ENCODE measurements at regions of chr3 and their contacts with region 1.

Region 1: DNA sequence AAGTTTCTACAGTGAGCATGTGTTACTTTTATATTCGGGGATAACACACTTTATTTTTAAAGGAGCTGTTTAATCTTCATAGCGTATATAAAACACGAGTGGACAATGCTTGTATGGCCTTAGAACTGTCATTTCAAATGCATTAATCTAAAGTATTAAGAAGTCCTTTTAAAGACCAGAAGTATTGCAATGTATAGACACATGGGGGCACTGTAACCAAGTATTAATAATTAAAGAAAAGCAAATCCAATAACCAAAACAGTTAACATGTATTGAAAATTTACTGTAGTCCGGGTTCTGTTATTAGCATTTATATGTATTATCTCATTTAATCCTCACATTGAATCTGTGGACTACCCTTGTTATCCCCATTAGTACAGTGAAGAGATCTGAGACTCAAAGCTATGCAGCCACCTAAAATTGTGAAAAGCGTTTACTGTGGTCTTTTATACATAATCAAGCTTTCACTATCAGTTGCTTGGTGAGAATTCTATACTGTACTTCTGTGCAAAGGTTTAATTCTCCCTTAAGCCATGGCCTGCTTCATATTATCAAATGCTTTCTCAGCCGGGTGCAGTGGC is 10.1 kb downstream of the ARL14 start:
- DNase-seq: peak; percentile 30
- H3K4me3 Mint-ChIP-seq: no peak overlapping the region
- H3K27ac Mint-ChIP-seq: no peak overlapping the region
- H3K4me1 Mint-ChIP-seq: no peaks in the 10 kb centered on the region
- H3K27me3 Mint-ChIP-seq: no peaks in the 10 kb centered on the region
- CTCF ChIP-seq: peak; percentile 24

Region 2: GRCh38 chr3:160676547-160677303 is 10.3 kb before region 1 on chr3 and contains the start of gene ARL14:
- CTCF ChIA-PET with region 1: interaction called, 25 read pairs
- POLR2A ChIA-PET with region 1: interaction called, 13 read pairs
- intact Hi-C with region 1: no loop called
- DNase-seq: peak; percentile 91
- H3K4me3 Mint-ChIP-seq: peak within 1 kb of the TSS; percentile 71
- H3K27ac Mint-ChIP-seq: peak within 1 kb of the TSS; percentile 95
- H3K4me1 Mint-ChIP-seq: peaks cover 36% of the 10 kb centered on the region
- H3K27me3 Mint-ChIP-seq: no peaks in the 10 kb centered on the region
- CTCF ChIP-seq: no peak
- total RNA-seq, gene ARL14: 0.72 and 1.1 TPM in 2 replicates

Region 3: GRCh38 chr3:160697628-160698382 is 10.8 kb after region 1 on chr3:
- CTCF ChIA-PET with region 1: interaction called, 19 read pairs
- POLR2A ChIA-PET with region 1: interaction called, 3 read pairs
- intact Hi-C with region 1: no loop called
- DNase-seq: peak; percentile 50
- H3K4me3 Mint-ChIP-seq: no peak overlapping the region
- H3K27ac Mint-ChIP-seq: no peak overlapping the region
- H3K4me1 Mint-ChIP-seq: no peaks in the 10 kb centered on the region
- H3K27me3 Mint-ChIP-seq: no peaks in the 10 kb centered on the region
- CTCF ChIP-seq: no peak

Region 4: GRCh38 chr3:160707187-160707794 is 20.2 kb after region 1 on chr3:
- CTCF ChIA-PET with region 1: interaction called, 12 read pairs
- POLR2A ChIA-PET with region 1: interaction called, 3 read pairs
- intact Hi-C with region 1: no loop called
- DNase-seq: peak; percentile 65
- H3K4me3 Mint-ChIP-seq: no peak overlapping the region
- H3K27ac Mint-ChIP-seq: no peak overlapping the region
- H3K4me1 Mint-ChIP-seq: no peaks in the 10 kb centered on the region
- H3K27me3 Mint-ChIP-seq: peaks cover 20% of the 10 kb centered on the region
- CTCF ChIP-seq: peak; percentile 54